Right cardiac atrium (tissue), 5 donors: ENCODE measurements at regions of chr6 and their contacts with region 1.

Region 1: GRCh38 chr6:106560996-106561685 is 68.2 kb downstream of the RTN4IP1 start:
- DNase-seq: no peak
- ATAC-seq: no peak
- H3K4me3 ChIP-seq: no peak overlapping the region
- H3K27ac ChIP-seq: no peak overlapping the region
- H3K4me1 ChIP-seq: no peaks in the 10 kb centered on the region
- H3K27me3 ChIP-seq: no peaks in the 10 kb centered on the region

Region 2: GRCh38 chr6:106103728-106104109 is 457.4 kb before region 1 on chr6:
- intact Hi-C with region 1: no loop called
- DNase-seq: no peak
- ATAC-seq: peak; percentile 16 to 45
- H3K4me3 ChIP-seq: peak overlapping the region; percentile 26
- H3K27ac ChIP-seq: no peak overlapping the region
- H3K4me1 ChIP-seq: no peaks in the 10 kb centered on the region
- H3K27me3 ChIP-seq: peaks cover 2% of the 10 kb centered on the region

Region 3: DNA sequence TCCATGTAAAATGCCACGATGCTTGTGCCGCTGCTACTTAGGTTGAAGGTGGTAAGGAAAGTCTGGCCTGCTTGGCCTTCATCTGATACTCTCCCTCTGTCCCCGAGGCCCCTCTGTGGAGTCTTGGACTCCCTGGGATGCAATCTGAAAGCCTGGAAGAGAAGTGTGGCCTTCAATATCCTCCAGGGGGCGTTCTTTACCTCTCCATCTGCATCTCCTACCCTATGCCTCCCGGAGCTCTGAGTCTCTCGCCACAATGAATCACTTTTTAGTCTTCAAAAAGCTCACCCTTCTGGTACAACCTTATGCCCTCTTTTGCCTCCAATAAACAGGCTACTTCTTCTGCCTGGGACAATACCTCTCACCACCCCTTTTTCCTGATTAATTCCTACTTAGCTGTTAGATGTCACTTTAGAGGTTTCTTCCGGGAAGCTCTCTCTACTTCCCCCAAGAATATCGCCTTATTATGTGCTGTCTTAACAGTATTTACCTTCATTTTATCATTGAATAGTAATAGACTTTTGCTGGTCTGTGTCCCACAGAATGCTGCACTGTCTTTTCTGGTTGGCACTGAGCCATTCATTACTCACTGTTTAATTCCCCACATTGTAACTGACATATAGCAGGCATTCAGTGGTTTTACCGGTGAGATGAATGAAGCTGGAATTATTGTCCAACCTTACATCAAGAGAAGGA is 221.7 kb before region 1 on chr6:
- intact Hi-C with region 1: loop called in 3 of 4 experiments (anchors 10 kb)
- DNase-seq: peak in 1 of 3 donors; percentile 9
- ATAC-seq: peak; percentile 75 to 89
- H3K4me3 ChIP-seq: no peak overlapping the region
- H3K27ac ChIP-seq: no peak overlapping the region
- H3K4me1 ChIP-seq: no peaks in the 10 kb centered on the region
- H3K27me3 ChIP-seq: no peaks in the 10 kb centered on the region

Region 4: GRCh38 chr6:106444777-106445507 is 116.2 kb before region 1 on chr6:
- intact Hi-C with region 1: loop called (anchors 2 to 5 kb)
- DNase-seq: no peak
- ATAC-seq: peak in 1 of 2 donors; percentile 73
- H3K4me3 ChIP-seq: no peak overlapping the region
- H3K27ac ChIP-seq: no peak overlapping the region
- H3K4me1 ChIP-seq: no peaks in the 10 kb centered on the region
- H3K27me3 ChIP-seq: no peaks in the 10 kb centered on the region